Mammary epithelial cell (primary cell): ENCODE measurements at regions of chr9 and their contacts with region 1.

Region 1: DNA sequence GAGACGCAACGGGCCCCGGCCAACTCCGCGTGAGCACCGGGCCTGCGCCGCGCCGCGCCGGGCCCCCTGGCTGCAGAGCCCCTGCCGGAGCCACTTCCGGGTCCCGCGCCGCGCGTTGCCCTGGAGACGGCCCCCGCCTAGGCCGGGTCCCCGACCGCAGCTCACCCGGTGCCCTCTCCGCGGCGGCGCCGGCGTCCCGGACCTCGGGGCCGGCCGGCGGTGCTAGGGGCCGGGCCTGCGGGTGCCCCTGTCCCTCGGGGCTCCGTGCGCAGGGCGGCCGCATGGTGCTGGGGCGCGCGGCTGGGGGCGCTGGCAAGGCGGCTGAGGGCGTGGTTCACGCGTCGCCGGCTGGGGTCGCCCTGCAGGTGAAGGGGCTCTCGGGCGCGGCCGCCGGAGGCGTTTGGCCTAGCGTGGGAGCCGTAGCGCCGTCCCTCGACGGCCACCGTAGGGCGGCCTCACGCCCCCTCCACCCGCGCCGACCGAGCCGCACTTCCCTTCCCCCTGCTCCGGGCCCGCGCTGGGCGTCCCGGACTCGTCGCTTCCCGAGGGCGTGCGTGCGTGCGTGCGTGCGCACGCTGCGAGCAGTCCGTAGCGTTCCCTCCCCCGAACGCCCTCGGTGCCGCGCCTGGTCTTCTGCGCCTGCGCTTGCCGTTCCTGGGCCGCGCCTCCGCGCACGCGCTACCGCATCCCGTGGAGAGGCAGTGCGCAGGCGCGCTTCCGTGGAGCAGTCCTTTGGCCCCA is at the start of gene TMEM250:
- DNase-seq: peak; percentile 96
- H3K4me3 ChIP-seq: peak within 1 kb of the TSS; percentile 68 to 86 (median 84)
- H3K27ac ChIP-seq: peak within 1 kb of the TSS; percentile 73
- H3K4me1 ChIP-seq: peaks cover 28% of the 10 kb centered on the region
- H3K27me3 ChIP-seq: no peaks in the 10 kb centered on the region
- CTCF ChIP-seq: no peak
- total RNA-seq, gene TMEM250: 33.8 to 49.8 TPM

Region 2: DNA sequence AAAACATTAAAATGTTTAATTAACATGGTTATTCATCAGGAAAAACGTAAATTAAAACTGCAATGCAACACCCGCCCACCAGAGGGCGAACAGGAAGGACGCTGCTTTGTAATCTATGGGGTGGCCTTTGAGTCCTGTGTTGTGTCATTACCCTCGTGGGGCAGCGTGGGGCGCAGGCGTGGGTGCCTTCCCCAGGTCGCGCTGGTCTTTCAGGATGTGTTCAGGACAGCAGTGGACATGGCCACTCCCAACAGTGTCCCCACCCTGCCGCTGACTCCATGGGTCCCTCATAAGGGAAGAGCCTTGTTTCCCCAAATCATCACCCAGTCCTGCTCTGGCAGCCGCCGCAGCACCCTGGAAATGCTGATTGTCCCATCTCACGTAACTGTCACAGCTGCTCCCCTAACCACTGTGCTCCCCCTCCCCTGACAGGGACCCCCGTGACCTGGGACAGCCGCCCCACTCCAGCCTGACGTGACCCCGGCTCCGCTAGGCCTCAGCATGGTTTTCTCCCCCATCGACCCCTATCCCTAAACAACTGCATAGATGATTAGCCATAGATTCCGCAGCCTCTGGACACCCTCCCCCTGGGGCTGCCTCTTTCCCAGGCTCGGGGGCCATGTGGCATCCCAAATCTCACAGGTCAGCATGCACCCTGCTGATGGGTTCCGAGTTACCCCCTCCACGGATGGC is 515.6 kb before region 1 on chr9:
- CTCF ChIA-PET with region 1: no interaction called
- dilution Hi-C with region 1: no loop called
- in situ Hi-C with region 1: no loop called
- intact Hi-C with region 1: loop called (anchors 1 kb)
- DNase-seq: peak; percentile 23
- H3K4me3 ChIP-seq: no peak overlapping the region
- H3K27ac ChIP-seq: no peak overlapping the region
- H3K4me1 ChIP-seq: no peaks in the 10 kb centered on the region
- H3K27me3 ChIP-seq: no peaks in the 10 kb centered on the region
- CTCF ChIP-seq: peak; percentile 70 to 75

Region 3: DNA sequence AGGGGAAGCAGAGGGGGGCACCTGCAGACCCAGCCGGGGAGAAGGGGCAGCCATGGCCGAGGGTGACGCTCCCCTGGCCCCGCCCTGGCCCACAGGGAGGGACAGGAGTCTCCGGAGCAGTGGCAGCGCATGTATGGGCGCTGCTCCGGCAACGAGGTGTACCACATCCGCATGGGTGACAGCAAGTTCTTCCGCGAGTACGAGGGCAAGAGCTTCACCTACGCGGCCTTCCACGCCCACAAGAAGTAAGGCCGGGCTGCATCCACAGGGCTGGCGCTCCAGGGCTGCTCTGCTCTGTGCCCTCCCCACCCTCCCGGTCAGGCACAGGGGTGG is 348.3 kb before region 1 on chr9:
- CTCF ChIA-PET with region 1: no interaction called
- dilution Hi-C with region 1: no loop called
- in situ Hi-C with region 1: no loop called
- intact Hi-C with region 1: no loop called
- DNase-seq: no peak
- H3K4me3 ChIP-seq: no peak overlapping the region
- H3K27ac ChIP-seq: no peak overlapping the region
- H3K4me1 ChIP-seq: no peaks in the 10 kb centered on the region
- H3K27me3 ChIP-seq: no peaks in the 10 kb centered on the region
- CTCF ChIP-seq: no peak

Region 4: DNA sequence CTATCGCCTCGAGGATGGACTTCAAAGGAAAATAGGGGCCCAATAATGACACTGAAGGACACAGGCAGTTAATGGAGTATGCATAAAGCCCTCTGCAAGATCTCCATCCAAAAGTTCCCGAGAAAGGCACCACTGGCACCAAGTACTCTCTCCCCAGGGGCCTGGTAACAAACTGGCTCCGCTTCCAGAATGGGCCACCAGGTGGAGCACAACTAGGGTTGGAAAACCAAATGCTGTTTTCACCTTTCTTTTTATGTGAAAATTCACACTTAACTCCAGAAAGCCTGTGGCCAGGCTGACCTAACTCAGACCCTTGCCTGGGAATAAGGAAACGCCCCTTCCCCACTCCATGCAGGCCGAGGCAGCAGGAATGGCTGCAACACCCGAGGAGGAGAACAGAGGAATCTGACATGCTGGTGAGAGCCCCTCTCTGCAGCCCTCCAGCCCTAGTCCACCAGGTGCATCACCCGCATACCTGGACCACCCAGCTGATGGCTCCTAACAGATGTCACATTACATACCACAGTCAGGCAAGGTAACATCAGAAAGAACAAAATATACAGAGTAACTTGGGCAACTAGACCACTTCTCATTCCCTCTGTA is 253.9 kb before region 1 on chr9:
- CTCF ChIA-PET with region 1: no interaction called
- dilution Hi-C with region 1: loop called (anchors 5 kb)
- in situ Hi-C with region 1: no loop called
- intact Hi-C with region 1: loop called (anchors 2 kb)
- DNase-seq: no peak
- H3K4me3 ChIP-seq: no peak overlapping the region
- H3K27ac ChIP-seq: no peak overlapping the region
- H3K4me1 ChIP-seq: no peaks in the 10 kb centered on the region
- H3K27me3 ChIP-seq: no peaks in the 10 kb centered on the region
- CTCF ChIP-seq: peak; percentile 92 to 95

Region 5: GRCh38 chr9:135971892-135972291 is 146.6 kb before region 1 on chr9:
- CTCF ChIA-PET with region 1: interaction called, 3 read pairs
- dilution Hi-C with region 1: loop called (anchors 5 kb)
- in situ Hi-C with region 1: loop called (anchors 5 to 10 kb)
- intact Hi-C with region 1: loop called (anchors 1 kb)
- DNase-seq: peak; percentile 74
- H3K4me3 ChIP-seq: no peak overlapping the region
- H3K27ac ChIP-seq: no peak overlapping the region
- H3K4me1 ChIP-seq: no peaks in the 10 kb centered on the region
- H3K27me3 ChIP-seq: no peaks in the 10 kb centered on the region
- CTCF ChIP-seq: no peak

Region 6: GRCh38 chr9:136093995-136094881 is 24.3 kb before region 1 on chr9:
- CTCF ChIA-PET with region 1: interaction called, 5 read pairs
- dilution Hi-C with region 1: no loop called
- in situ Hi-C with region 1: no loop called
- intact Hi-C with region 1: loop called (anchors 1 kb)
- DNase-seq: peak; percentile 62
- H3K4me3 ChIP-seq: peak overlapping the region; percentile 65 to 77 (median 70)
- H3K27ac ChIP-seq: peak overlapping the region; percentile 33
- H3K4me1 ChIP-seq: peaks cover 35% of the 10 kb centered on the region
- H3K27me3 ChIP-seq: no peaks in the 10 kb centered on the region
- CTCF ChIP-seq: no peak